ENCODE measurements at regions of chr3 and their contacts with region 1.

Region 1: GRCh38 chr3:134373994-134374790 is at the start of gene AMOTL2:
- DNase-seq: peak; percentile 89
- ATAC-seq: peak; percentile 81
- H3K4me3 ChIP-seq: peak within 1 kb of the TSS; percentile 89 to 94 (median 91)
- H3K27ac ChIP-seq: peak within 1 kb of the TSS; percentile 97
- H3K4me1 ChIP-seq: peaks cover 74% of the 10 kb centered on the region
- H3K27me3 ChIP-seq: peaks cover 0 to 24% of the 10 kb centered on the region in 2 experiments; a peak in 4 of 5 replicates
- CTCF ChIP-seq: no peak
- EP300 ChIP-seq: peak; percentile 88; a peak in 3 of 4 replicates
- POLR2A ChIP-seq: peak; percentile 84 to 96
- RAD21 ChIP-seq: no peak; the same call in none of the 2 replicates
- total RNA-seq, gene AMOTL2: 11.5 and 17.3 TPM in 2 replicates

Region 2: GRCh38 chr3:134326760-134327593 is 47.2 kb before region 1 on chr3:
- CTCF ChIA-PET with region 1: no interaction called
- POLR2A ChIA-PET with region 1: interaction called, 16 read pairs
- in situ Hi-C with region 1: no loop called
- intact Hi-C with region 1: no loop called
- DNase-seq: peak; percentile 90
- ATAC-seq: peak; percentile 95
- H3K4me3 ChIP-seq: no peak overlapping the region
- H3K27ac ChIP-seq: no peak overlapping the region
- H3K4me1 ChIP-seq: peaks cover 77% of the 10 kb centered on the region
- H3K27me3 ChIP-seq: no peaks in the 10 kb centered on the region
- CTCF ChIP-seq: no peak
- EP300 ChIP-seq: peak in 1 of 2 experiments; percentile 77; a peak in 1 of 4 replicates
- POLR2A ChIP-seq: no peak
- RAD21 ChIP-seq: no peak

Region 3: DNA sequence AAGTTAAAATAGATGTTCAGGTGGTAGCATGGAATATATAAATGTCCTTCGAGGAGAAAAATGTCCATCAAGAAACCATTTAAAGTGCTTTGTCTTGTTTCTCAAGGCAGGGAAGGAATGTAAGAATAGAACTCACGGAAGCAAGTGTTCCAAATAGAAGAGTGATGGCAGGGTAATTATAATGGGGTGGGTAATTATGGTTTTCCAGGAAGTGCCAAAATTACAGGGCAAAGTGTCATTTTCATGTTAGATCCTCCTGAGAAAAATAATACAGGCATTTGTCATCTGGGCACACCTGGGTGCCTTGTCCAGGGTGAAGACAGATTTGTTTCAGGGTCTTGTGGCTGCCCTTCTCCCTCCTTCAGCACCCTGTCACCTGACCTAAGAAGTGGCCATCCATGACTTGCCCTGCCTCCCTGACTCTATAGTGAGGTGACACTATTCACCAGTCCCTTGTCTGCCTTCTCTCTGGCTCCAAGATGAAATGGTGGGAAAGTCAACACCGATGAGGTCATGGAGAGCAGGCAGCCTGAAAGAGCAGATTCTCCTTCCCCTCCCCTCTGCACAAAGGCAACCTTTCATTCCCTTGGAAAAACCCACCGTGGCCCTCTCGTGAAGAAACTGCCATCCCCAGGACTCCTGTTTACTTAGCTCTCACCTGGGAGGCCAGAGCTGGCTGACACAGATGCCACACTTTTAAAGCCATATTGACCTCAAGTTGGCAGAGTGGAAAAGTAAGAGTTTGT is 45.2 kb after region 1 on chr3:
- CTCF ChIA-PET with region 1: no interaction called
- POLR2A ChIA-PET with region 1: interaction called, 6 read pairs
- in situ Hi-C with region 1: no loop called
- intact Hi-C with region 1: loop called (anchors 2 kb)
- DNase-seq: peak; percentile 96
- ATAC-seq: peak; percentile 91
- H3K4me3 ChIP-seq: peak overlapping the region in 2 of 3 experiments; percentile 11 to 25; a peak in 2 of 6 replicates
- H3K27ac ChIP-seq: peak overlapping the region; percentile 70
- H3K4me1 ChIP-seq: peaks cover 47% of the 10 kb centered on the region
- H3K27me3 ChIP-seq: no peaks in the 10 kb centered on the region; a peak in 1 of 5 replicates
- CTCF ChIP-seq: peak; percentile 19; the same call in 1 of the 2 replicates
- EP300 ChIP-seq: peak; percentile 60 to 86; a peak in 2 of 4 replicates
- POLR2A ChIP-seq: no peak
- RAD21 ChIP-seq: no peak

Region 4: GRCh38 chr3:134449277-134449676 is 75.1 kb after region 1 on chr3:
- CTCF ChIA-PET with region 1: no interaction called
- POLR2A ChIA-PET with region 1: interaction called, 4 read pairs
- in situ Hi-C with region 1: no loop called
- intact Hi-C with region 1: loop called (anchors 2 kb)
- DNase-seq: peak; percentile 56
- ATAC-seq: peak; percentile 92
- H3K4me3 ChIP-seq: no peak overlapping the region
- H3K27ac ChIP-seq: no peak overlapping the region
- H3K4me1 ChIP-seq: peaks cover 11% of the 10 kb centered on the region; the same call in 1 of the 2 replicates
- H3K27me3 ChIP-seq: peaks cover 2 to 8% of the 10 kb centered on the region in 2 experiments; a peak in 3 of 5 replicates
- CTCF ChIP-seq: peak; percentile 72
- EP300 ChIP-seq: no peak
- POLR2A ChIP-seq: no peak
- RAD21 ChIP-seq: peak; percentile 65; the same call in 1 of the 2 replicates

Region 5: DNA sequence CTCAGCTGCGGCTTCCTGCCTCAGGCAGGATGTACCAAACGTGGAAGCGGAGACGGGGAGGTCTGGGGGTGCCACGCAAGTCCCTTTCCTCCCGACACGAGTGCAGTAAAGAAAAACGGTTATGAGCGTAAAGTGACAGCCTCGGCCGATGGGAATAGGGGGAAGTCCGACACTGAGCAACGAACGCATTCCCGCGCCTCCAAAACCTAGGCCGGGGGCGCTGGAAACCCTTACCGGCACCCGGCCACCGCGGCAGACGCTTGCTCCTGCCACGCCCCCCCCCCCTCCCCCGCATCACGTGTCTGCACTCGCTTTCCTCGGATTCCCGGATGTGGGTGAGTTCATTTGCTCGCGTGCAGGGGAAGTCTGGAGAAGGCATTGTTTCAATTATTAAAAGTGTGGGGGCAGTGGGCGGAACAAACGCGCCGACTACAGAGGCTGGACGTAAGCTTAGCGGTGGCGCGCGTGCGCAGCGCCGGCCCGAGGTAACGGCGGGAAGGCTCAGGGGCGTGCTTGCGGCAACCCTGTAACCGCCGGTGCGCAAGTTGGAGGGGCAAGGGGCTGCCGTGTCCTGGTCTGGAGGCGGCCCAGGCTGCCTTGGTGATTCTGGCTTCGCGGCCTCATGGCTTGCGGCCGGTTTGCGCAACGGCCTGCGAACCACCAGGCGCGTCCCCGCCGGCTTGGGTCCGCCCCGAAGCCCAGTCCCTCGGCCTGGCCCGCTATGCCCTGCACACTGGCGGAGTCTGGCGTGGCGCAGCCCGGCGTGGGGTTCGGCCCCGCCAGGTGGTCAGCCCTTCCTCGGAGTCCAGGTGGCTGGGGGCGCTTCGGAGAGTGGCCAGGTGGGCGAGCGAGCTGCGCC is 111.8 kb after region 1 on chr3 and contains the starts of genes ANAPC13 and CEP63:
- CTCF ChIA-PET with region 1: no interaction called
- POLR2A ChIA-PET with region 1: interaction called, 18 read pairs
- in situ Hi-C with region 1: no loop called
- intact Hi-C with region 1: no loop called
- DNase-seq: peak; percentile 97
- ATAC-seq: peak; percentile 89
- H3K4me3 ChIP-seq: peak within 1 kb of the TSS; percentile 86 to 89 (median 88)
- H3K27ac ChIP-seq: peak within 1 kb of the TSS; percentile 95
- H3K4me1 ChIP-seq: peaks cover 29% of the 10 kb centered on the region
- H3K27me3 ChIP-seq: no peaks in the 10 kb centered on the region
- CTCF ChIP-seq: peak; percentile 14; the same call in 1 of the 2 replicates
- EP300 ChIP-seq: peak in 1 of 2 experiments; percentile 33; a peak in 1 of 4 replicates
- POLR2A ChIP-seq: peak; percentile 75 to 88
- RAD21 ChIP-seq: peak; percentile 12; the same call in 1 of the 2 replicates
- total RNA-seq, gene ANAPC13: 69.1 and 95.1 TPM in 2 replicates
- total RNA-seq, gene CEP63: 18.4 and 25.6 TPM in 2 replicates

Measured in HepG2 (cell line).